Activated CD4-positive, alpha-beta memory T cell treated with anti-CD3 and anti-CD28 coated beads for 36 hours (primary cell): ENCODE measurements at regions of chr7 and their contacts with region 1.

Region 1: GRCh38 chr7:30276203-30276900 is 8.0 kb upstream of the ZNRF2 start:
- DNase-seq: peak; percentile 61
- H3K4me3 Mint-ChIP-seq: no peak overlapping the region
- H3K27ac Mint-ChIP-seq: no peak overlapping the region
- H3K4me1 Mint-ChIP-seq: peaks cover 5% of the 10 kb centered on the region
- H3K27me3 Mint-ChIP-seq: no peaks in the 10 kb centered on the region

Region 2: DNA sequence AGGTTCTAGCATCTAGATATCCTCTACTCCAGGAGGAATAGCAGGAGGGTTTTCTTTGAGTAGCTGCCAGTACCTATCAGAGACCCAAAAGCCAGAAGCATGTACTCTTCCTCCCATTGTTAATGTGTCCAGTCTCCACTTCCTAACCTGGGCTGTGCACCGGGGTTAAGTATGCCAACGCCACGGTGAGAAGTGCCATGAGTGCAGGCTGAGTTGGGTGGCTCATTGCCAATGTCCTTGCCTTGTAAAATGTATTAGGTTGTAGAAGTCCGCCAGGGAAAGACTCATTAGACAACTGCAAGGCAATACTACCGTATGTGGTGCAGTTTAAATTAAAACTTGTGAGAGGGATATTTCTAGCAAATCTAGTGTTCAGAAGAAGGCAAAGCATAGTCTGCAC is 767.7 kb before region 1 on chr7:
- CTCF ChIA-PET with region 1: no interaction called
- POLR2A ChIA-PET with region 1: no interaction called
- intact Hi-C with region 1: no loop called
- DNase-seq: no peak
- H3K4me3 Mint-ChIP-seq: no peak overlapping the region
- H3K27ac Mint-ChIP-seq: no peak overlapping the region
- H3K4me1 Mint-ChIP-seq: no peaks in the 10 kb centered on the region
- H3K27me3 Mint-ChIP-seq: no peaks in the 10 kb centered on the region

Region 3: DNA sequence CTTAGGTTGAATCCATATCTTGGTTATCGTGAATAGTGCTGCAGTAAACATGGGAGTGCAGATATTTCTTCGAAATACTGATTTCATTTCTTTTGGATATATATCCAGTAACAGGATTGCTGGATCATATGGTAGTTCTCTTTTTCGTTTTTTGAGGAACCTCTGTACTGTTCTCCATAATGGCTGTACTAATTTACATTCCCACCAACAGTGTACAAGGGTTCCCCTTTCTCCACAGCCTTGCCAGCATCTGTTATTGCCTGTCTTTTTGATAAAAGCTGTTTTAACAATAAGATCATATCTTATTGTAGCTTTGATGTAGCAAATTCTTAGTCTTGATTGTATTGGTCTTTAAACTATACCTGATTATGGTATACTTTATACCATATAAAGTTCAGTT is 53.4 kb after region 1 on chr7:
- CTCF ChIA-PET with region 1: no interaction called
- POLR2A ChIA-PET with region 1: no interaction called
- intact Hi-C with region 1: no loop called
- DNase-seq: no peak
- H3K4me3 Mint-ChIP-seq: no peak overlapping the region
- H3K27ac Mint-ChIP-seq: no peak overlapping the region
- H3K4me1 Mint-ChIP-seq: peaks cover 65% of the 10 kb centered on the region
- H3K27me3 Mint-ChIP-seq: no peaks in the 10 kb centered on the region

Region 4: DNA sequence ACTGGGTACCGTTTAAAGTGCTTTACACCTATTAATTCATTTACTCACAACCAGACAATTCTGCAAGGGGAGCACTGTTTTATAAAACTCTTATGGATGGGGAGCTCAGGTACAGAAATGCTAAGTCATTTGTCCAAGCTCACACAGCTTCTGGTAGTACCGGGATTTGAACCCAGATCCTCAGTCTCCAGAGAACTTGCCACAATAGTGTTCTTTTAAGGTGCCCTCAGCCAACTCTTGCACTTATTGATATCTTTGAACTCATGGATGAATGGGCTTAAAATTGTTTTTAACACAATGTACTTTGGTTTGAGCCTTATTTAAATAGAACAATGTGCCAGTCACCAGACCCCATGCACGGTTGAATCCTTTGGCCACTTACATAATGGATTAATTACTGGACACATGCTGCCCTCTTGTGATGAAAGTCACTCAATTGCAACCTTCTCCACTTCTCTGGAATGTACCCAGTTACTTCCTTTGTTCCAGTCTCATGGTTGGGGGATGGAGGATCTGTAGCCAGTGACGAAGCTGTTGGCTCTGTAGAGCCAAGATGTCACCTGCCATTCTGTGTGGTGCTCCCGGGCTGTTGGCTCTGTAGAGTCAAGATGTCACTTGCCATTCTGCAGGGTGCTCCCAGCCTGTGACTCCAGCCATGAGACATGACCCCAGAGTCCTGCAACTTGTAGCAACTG is 136.6 kb after region 1 on chr7:
- CTCF ChIA-PET with region 1: interaction called, 39 read pairs
- POLR2A ChIA-PET with region 1: no interaction called
- intact Hi-C with region 1: loop called (anchors 1 kb)
- DNase-seq: no peak
- H3K4me3 Mint-ChIP-seq: no peak overlapping the region
- H3K27ac Mint-ChIP-seq: no peak overlapping the region
- H3K4me1 Mint-ChIP-seq: no peaks in the 10 kb centered on the region
- H3K27me3 Mint-ChIP-seq: no peaks in the 10 kb centered on the region

Region 5: GRCh38 chr7:30504347-30505173 is 228.2 kb after region 1 on chr7 and contains the start of gene GGCT:
- CTCF ChIA-PET with region 1: interaction called, 3 read pairs
- POLR2A ChIA-PET with region 1: no interaction called
- intact Hi-C with region 1: loop called (anchors 2 kb)
- DNase-seq: peak; percentile 99
- H3K4me3 Mint-ChIP-seq: peak within 1 kb of the TSS; percentile 77
- H3K27ac Mint-ChIP-seq: peak within 1 kb of the TSS; percentile 79
- H3K4me1 Mint-ChIP-seq: peaks cover 38% of the 10 kb centered on the region
- H3K27me3 Mint-ChIP-seq: no peaks in the 10 kb centered on the region
- total RNA-seq, gene GGCT: 60.5 to 68.0 TPM

Region 6: GRCh38 chr7:30510124-30511075 is 234.0 kb after region 1 on chr7:
- CTCF ChIA-PET with region 1: interaction called, 10 read pairs
- POLR2A ChIA-PET with region 1: no interaction called
- intact Hi-C with region 1: loop called (anchors 2 kb)
- DNase-seq: peak; percentile 46
- H3K4me3 Mint-ChIP-seq: no peak overlapping the region
- H3K27ac Mint-ChIP-seq: no peak overlapping the region
- H3K4me1 Mint-ChIP-seq: peaks cover 9% of the 10 kb centered on the region
- H3K27me3 Mint-ChIP-seq: no peaks in the 10 kb centered on the region